Head of caudate nucleus (tissue), 42 donors: ENCODE measurements at regions of chr7 and their contacts with region 1.

Region 1: DNA sequence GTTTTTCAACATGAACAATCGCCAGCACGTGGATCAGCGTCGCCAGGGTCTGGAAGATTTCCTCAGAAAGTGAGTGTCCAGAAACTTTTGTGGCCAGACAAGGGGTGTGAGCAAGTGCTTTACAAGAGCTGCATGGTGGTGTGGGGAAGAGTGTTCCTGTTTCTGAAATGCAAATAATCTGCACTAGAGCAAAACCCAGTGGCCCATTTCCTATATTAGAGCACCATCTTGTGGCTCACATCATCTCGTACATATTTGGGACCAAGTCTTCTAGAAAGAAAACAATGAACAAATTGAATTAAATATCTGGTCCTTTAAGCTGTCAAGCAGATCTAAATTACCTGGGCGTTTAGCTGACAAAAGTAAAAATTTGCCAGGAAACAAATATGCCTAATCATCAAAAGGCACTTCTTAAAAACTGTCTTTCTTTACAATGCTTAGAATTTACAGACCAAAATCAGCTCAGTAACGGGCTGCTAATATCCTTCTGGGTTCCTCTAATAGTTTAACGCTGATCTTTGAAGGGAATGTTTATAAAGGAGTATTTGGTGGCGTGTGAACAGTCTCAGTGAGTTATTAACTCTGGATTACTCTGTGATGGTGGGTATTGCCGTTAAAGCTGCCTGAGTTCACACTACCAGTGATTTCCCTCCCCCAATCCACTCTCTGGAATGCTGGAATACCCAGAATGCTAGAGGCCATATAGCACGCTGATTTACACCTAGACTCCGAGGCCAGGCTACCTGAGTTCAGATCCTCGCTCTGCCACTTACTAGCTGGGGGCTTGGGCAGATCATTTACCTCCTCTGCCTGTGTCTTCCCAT is 73.6 kb downstream of the SNX10 start:
- DNase-seq: peak in 33 of 42 donors; percentile 19 to 84 (median 64)

Region 2: GRCh38 chr7:25894902-25895791 is 470.1 kb before region 1 on chr7:
- intact Hi-C with region 1: loop called (anchors 2 kb)
- DNase-seq: peak; percentile 40 to 85 (median 69)

Region 3: DNA sequence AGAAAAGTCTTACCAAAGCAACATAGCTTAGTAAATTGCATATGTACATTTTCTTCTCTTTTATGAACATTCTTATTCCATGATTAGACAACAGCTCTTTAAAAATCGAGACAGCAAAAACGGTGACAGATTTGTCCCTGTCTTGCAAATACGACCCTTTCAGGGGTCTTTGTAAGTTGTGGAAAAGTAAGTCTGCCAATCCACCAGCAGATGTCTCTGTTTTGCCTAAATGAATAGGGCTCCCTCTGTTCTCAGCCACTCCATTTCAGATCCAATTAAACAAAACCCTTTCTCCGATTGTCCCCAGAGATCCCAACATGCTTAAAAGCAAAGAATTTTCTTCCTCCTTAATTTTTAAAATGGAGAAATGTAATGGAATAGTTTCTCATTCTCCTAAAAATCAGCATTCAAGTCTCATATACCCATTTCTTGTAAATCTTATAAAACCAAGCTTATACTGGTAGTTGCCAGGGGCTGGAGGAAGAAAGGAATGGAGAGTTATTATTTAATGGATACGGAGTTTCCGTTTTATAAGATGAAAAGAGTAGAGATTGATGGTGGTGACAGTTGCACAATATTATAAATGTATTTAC is 274.3 kb before region 1 on chr7:
- intact Hi-C with region 1: loop called (anchors 5 kb)
- DNase-seq: peak in 16 of 42 donors; percentile 10 to 65 (median 30)

Region 4: DNA sequence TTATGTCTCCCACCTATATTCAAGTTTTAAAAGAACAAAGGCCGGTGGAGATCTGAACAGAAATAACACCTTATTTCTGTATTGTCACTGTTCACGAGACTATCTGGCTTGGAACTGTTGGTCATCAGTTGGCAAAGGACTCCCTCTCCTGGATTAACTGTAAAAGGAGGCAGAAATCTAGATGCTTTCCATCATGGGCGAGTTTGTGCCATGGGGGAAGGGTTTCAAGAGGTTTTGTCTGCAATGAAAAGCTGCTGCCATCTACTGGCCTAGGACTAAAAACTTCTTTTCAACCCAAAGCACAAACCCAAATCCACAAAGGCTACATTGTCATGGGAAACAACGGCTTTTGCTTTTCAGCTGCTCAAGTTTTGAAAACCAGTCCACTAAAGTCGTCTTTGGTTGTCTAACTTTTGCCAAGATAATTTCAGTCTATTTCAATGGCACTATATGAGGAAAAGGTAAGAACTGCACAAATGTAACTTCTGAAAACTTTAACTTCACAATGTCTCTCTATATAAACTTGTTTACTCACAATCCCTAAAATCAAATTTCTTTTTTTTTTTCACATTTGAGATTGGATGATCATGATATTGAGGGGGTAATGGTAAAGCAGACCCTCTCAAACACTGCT is 302.3 kb after region 1 on chr7:
- intact Hi-C with region 1: loop called (anchors 2 kb)
- DNase-seq: peak in 41 of 42 donors; percentile 43 to 94 (median 78)

Region 5: GRCh38 chr7:27160546-27161213 is 795.4 kb after region 1 on chr7:
- intact Hi-C with region 1: loop called (anchors 5 kb)
- DNase-seq: peak; percentile 72 to 94 (median 84)